ENCODE measurements at regions of chr6 and their contacts with region 1.

Region 1: GRCh38 chr6:32984605-32985389 is 16.4 kb downstream of the BRD2 start:
- DNase-seq: peak; percentile 97
- H3K4me3 ChIP-seq: no peak overlapping the region
- H3K27ac ChIP-seq: no peak overlapping the region
- H3K4me1 ChIP-seq: peaks cover 14 to 46% (median 27%) of the 10 kb centered on the region in 4 donors
- H3K27me3 ChIP-seq: no peaks in the 10 kb centered on the region
- CTCF ChIP-seq: peak; percentile 87 to 92 (median 90)
- EP300 ChIP-seq: no peak
- POLR2A ChIP-seq: no peak

Region 2: GRCh38 chr6:32752580-32752979 is 232.2 kb before region 1 on chr6:
- intact Hi-C with region 1: no loop called
- DNase-seq: no peak
- H3K4me3 ChIP-seq: no peak overlapping the region
- H3K27ac ChIP-seq: no peak overlapping the region
- H3K4me1 ChIP-seq: no peaks in the 10 kb centered on the region
- H3K27me3 ChIP-seq: peaks cover 0 to 22% (median 0%) of the 10 kb centered on the region in 4 donors
- CTCF ChIP-seq: no peak
- EP300 ChIP-seq: no peak
- POLR2A ChIP-seq: no peak

Region 3: GRCh38 chr6:32807020-32807580 is 177.7 kb before region 1 on chr6:
- intact Hi-C with region 1: no loop called
- DNase-seq: no peak
- H3K4me3 ChIP-seq: no peak overlapping the region
- H3K27ac ChIP-seq: no peak overlapping the region
- H3K4me1 ChIP-seq: no peaks in the 10 kb centered on the region
- H3K27me3 ChIP-seq: peaks cover 0 to 24% (median 0%) of the 10 kb centered on the region in 4 donors
- CTCF ChIP-seq: no peak
- EP300 ChIP-seq: no peak
- POLR2A ChIP-seq: no peak

Region 4: GRCh38 chr6:32885698-32886286 is 99.0 kb before region 1 on chr6:
- intact Hi-C with region 1: loop called (anchors 1 kb)
- DNase-seq: no peak
- H3K4me3 ChIP-seq: no peak overlapping the region
- H3K27ac ChIP-seq: no peak overlapping the region
- H3K4me1 ChIP-seq: peaks cover 0 to 23% (median 18%) of the 10 kb centered on the region in 4 donors
- H3K27me3 ChIP-seq: no peaks in the 10 kb centered on the region
- CTCF ChIP-seq: peak; percentile 63 to 70 (median 64)
- EP300 ChIP-seq: no peak
- POLR2A ChIP-seq: no peak

Region 5: DNA sequence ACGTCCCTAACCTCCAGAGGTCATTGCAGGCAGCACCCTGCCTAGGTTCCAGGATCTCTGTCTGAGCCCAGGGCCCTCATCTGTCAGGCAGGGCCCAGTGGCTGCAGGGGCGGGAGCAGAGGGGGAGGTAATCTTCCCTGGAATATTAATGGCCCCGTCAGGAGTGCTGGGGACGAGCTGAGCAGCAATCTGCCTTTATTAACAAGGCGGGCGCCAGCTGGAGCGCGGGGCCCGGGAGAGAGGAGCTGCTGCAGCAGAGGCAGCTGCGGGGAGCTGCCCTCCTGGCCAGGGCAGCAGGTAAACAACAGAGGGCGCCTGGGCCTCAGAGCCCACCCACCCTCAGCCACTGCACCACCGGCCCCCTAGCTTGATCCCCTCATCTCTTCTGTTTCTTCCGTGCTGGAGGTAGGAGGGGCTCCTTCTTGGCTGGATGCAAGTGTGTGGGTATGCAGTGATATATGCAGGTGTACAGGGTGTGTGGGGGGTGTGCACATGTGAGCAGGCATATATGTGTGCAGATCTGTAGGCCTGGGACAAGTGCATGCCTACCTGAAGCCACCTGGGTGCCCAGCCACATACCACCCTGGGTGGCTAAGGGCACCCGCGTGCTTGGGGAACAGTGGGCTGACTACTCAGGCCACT is 950.8 kb after region 1 on chr6:
- intact Hi-C with region 1: no loop called
- DNase-seq: no peak
- H3K4me3 ChIP-seq: no peak overlapping the region
- H3K27ac ChIP-seq: no peak overlapping the region
- H3K4me1 ChIP-seq: no peaks in the 10 kb centered on the region
- H3K27me3 ChIP-seq: peaks cover 0 to 48% (median 8%) of the 10 kb centered on the region in 4 donors
- CTCF ChIP-seq: no peak
- EP300 ChIP-seq: no peak
- POLR2A ChIP-seq: no peak